ENCODE measurements at regions of chr15 and their contacts with region 1.

Region 1: DNA sequence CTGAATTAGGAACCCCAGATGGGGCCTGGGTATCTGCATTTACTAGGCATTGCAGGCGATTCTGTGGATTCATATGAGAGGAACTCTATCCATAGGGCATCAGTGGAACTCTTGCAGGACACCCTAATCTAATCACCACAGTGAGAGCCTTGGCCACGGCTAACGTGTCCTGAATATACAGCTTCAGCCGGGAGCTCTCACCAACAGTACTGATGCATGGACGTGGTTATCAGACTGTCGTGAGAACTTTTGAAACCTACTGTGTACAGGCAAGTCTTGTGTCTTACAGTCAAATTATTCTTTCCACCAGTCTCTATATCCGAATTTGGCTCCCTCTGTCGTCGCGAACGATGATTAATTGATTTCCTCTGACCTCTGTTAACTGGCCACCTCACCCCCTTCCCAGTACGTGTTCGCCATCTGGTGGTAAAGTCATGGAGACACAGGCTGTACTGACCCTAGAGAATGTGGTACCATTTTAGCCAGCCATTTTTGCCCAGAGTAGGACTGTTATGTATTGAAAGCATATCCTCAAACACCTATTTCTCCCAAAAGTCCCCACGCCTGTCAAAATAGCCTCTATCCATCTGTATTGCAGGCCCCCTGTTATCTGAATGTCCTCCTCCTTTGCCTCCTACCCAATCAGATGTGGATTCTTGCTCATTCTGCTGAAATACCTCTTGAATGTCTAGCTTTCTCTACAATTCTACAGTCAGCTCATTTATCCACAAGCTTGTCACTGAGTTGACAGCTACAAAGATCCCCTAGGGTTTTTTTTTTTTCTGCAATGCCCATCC is 39.7 kb downstream of the GLDN start:
- DNase-seq: no peak
- ATAC-seq: peak; percentile 92
- H3K4me3 ChIP-seq: no peak overlapping the region
- H3K27ac ChIP-seq: no peak overlapping the region
- H3K4me1 ChIP-seq: no peaks in the 10 kb centered on the region
- H3K27me3 ChIP-seq: no peaks in the 10 kb centered on the region
- CTCF ChIP-seq: peak; percentile 79

Region 2: DNA sequence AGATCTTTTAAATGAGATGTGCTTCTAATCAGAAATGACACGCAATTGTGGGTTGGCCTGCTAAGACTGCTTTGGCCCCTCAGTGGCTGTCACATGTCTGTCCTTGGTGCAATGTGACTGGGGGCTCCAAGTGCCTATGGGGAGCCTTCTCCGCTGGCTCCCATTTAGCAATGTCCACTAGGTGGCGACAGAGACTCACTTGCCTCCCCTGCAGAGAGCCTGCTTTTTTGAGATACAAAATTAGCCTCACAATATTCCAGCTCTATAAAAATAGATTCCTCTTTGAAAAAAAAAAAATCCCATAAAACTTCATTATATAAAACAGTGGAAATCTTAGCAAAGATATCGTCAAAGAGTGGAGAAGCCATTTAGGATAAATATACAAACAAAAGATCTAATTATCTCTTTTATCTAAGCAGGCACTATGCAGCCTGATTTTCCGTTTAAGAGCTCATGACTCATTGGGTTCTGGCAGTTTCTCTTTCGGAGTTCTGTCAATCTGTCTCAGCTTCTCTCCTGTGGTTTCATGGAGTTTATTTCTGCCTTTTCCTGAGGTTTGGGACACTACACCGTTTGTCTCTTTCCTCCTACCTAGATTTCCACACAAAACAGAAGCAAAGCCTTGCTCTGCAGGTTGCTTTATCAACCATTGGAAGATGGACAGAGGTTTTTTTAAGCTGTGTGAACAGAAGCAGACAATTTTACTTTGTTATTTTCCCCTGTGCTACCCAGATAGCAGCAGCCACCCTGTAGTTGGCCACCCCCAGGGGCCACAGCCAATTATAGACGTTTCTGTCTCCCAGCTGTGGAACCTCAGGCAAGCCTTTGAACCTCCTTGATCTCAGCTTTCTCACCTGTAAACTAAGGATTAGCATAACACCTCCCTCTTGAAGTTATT is 218.1 kb before region 1 on chr15:
- intact Hi-C with region 1: loop called (anchors 10 kb)
- DNase-seq: no peak
- ATAC-seq: peak; percentile 92
- H3K4me3 ChIP-seq: peak overlapping the region; percentile 15
- H3K27ac ChIP-seq: no peak overlapping the region
- H3K4me1 ChIP-seq: peaks cover 8% of the 10 kb centered on the region
- H3K27me3 ChIP-seq: no peaks in the 10 kb centered on the region
- CTCF ChIP-seq: peak; percentile 96

Region 3: GRCh38 chr15:51253366-51253765 is 127.8 kb before region 1 on chr15:
- intact Hi-C with region 1: loop called (anchors 10 kb)
- DNase-seq: no peak
- ATAC-seq: peak; percentile 56
- H3K4me3 ChIP-seq: no peak overlapping the region
- H3K27ac ChIP-seq: no peak overlapping the region
- H3K4me1 ChIP-seq: no peaks in the 10 kb centered on the region
- H3K27me3 ChIP-seq: no peaks in the 10 kb centered on the region
- CTCF ChIP-seq: no peak

Measured in upper lobe of right lung (tissue), 1 donor.